Posterior cingulate gyrus (tissue), 11 donors: ENCODE measurements at regions of chr11 and their contacts with region 1.

Region 1: DNA sequence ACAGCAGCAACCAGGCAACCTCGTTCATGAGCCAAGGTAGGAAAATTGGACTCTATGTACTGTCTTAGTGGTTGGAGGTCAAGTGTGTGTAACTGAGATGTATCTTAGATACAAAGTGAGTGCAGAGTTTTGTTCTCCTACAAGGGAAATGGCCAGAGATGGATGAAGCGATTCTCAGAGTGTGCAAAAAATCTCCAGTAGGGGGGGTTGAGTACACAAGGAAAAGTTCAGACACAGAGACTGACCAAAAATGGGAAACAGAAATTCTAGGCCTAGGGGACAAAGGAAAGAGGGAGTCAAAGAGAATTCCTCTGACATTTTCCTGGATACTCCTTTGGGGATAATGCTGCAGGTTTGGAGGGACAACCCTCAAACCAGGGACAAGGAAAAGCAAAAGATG is 38.2 kb upstream of the OR5AK2 start:
- DNase-seq: no peak

Region 2: DNA sequence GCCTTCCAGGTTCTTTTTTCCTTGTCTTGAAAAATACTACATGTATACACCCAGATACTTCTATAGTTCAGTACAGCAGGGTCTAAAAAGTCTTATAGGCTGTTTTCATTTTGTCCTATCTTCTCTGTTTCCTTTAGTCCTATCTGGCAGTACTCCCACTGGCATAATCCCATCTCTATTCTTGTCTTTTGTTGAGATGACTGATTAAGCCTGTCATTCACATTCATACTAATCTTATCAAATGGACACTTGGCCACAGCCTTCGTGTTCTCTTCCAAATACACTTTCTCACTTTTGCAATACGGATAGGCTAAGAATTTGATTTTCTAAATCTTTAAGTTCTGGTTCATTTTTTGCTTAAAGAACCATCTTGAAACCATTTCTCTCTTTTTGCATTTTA is 81.0 kb after region 1 on chr11:
- intact Hi-C with region 1: loop called (anchors 10 kb)
- DNase-seq: no peak